Aorta (tissue), 5 donors: ENCODE measurements at regions of chr10 and their contacts with region 1.

Region 1: GRCh38 chr10:5563991-5564536 is 39.3 kb downstream of the CALML3 start:
- DNase-seq: peak in 1 of 2 donors; percentile 82
- ATAC-seq: peak; percentile 33
- H3K4me3 ChIP-seq: no peak overlapping the region
- H3K27ac ChIP-seq: peak overlapping the region; percentile 2 to 19
- H3K4me1 ChIP-seq: peaks cover 0 to 1% of the 10 kb centered on the region in 2 donors
- H3K27me3 ChIP-seq: no peaks in the 10 kb centered on the region

Region 2: DNA sequence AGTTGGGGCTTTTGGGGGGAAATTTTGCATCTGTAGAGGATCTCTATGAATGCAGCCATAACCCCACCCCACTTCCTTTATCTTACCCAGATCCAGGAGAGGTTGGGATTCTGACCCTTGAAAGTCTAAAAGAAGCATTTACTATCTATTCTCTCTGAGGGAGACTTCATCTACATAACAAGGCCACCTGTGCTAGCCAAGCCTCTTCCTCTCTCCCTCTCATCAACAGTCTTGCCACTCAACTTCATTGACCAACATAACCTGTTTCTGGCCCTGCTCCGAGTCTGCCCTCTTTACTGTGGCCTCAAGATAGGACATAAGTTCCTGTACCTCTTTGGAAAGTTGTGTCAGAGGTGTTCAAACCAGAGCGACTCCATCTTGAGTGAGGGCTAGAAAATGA is 178.8 kb before region 1 on chr10:
- intact Hi-C with region 1: no loop called
- DNase-seq: no peak
- ATAC-seq: no peak
- H3K4me3 ChIP-seq: no peak overlapping the region
- H3K27ac ChIP-seq: no peak overlapping the region
- H3K4me1 ChIP-seq: no peaks in the 10 kb centered on the region
- H3K27me3 ChIP-seq: no peaks in the 10 kb centered on the region

Region 3: DNA sequence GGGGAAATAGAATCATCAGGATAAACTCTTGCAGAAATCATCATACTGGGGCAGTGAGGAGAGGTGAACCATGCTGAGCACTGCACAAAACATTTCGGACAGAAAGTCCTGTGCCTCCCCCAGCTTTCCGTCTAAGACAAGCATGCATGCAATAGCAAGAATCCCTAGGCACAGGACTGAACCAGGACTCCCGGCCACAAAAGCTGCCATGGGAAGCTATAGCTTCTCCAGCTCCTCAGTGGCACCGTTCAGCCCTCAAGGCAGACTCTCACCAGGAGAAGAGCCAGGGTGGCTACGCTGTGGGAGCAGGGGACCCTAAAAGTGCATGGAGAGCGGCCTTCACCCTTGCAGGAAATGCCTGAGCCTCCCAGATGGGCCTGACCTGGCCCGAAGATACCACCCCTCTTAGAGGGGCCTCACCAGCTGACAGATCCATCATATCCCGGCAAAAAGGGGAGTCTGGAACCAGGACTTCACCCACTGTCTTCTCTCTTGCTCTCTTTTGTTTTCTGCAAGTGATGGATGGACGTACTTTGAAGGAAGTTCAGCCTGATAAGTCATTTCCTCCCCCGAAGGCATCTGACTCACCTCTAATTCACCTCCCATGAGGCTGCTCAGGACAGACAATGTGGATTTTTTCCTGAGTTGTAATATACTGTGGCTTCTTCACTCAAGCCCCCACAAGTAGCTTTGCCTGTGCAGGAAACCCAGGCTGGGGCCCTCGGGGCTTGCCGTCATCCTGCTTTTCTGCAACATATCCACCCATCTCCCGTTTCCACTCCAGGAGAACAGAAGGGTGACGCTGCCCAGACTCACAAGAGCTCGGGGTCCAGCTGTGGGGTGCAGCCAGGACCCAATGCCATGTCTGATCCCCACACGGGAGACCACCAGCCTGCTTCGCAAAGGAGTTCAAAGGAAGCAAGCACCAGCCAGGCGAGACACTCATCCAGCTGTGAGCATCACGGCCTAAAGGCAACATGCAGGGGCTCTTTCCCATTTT is 31.8 kb after region 1 on chr10:
- intact Hi-C with region 1: loop called (anchors 5 kb)
- DNase-seq: peak; percentile 28 to 65
- ATAC-seq: no peak
- H3K4me3 ChIP-seq: no peak overlapping the region
- H3K27ac ChIP-seq: no peak overlapping the region
- H3K4me1 ChIP-seq: peaks cover 0 to 1% of the 10 kb centered on the region in 2 donors
- H3K27me3 ChIP-seq: no peaks in the 10 kb centered on the region

Region 4: GRCh38 chr10:5601826-5602495 is 37.9 kb after region 1 on chr10:
- intact Hi-C with region 1: loop called (anchors 5 kb)
- DNase-seq: peak; percentile 39 to 58
- ATAC-seq: no peak
- H3K4me3 ChIP-seq: no peak overlapping the region
- H3K27ac ChIP-seq: peak overlapping the region; percentile 68 to 88
- H3K4me1 ChIP-seq: peaks cover 5 to 8% of the 10 kb centered on the region in 2 donors
- H3K27me3 ChIP-seq: no peaks in the 10 kb centered on the region